ENCODE measurements at regions of chr16 and their contacts with region 1.

Region 1: GRCh38 chr16:87435372-87436224 is 43.5 kb downstream of the MAP1LC3B start:
- DNase-seq: no peak
- H3K4me3 Mint-ChIP-seq: no peak overlapping the region
- H3K27ac Mint-ChIP-seq: no peak overlapping the region
- H3K4me1 Mint-ChIP-seq: peaks cover 12% of the 10 kb centered on the region
- H3K27me3 Mint-ChIP-seq: peaks cover 2% of the 10 kb centered on the region

Region 2: GRCh38 chr16:87492721-87493607 is 57.4 kb after region 1 on chr16 and contains the start of gene ZCCHC14:
- intact Hi-C with region 1: loop called (anchors 5 kb)
- DNase-seq: peak; percentile 100
- H3K4me3 Mint-ChIP-seq: peak within 1 kb of the TSS; percentile 82
- H3K27ac Mint-ChIP-seq: peak within 1 kb of the TSS; percentile 64
- H3K4me1 Mint-ChIP-seq: peaks cover 34% of the 10 kb centered on the region
- H3K27me3 Mint-ChIP-seq: peaks cover 40% of the 10 kb centered on the region
- total RNA-seq, gene ZCCHC14: 11.6 and 12.0 TPM in 2 replicates

Measured in activated CD4-positive, alpha-beta T cell treated with anti-CD3 and anti-CD28 coated beads, Interleukin-2, amount 10 ng/mL, durations not matched to agents 24 days and 14 days (primary cell).